ENCODE measurements at regions of chr17 and their contacts with region 1.

Region 1: GRCh38 chr17:58249270-58250133 is 11.1 kb downstream of the LPO start:
- DNase-seq: peak; percentile 60 to 95
- ATAC-seq: peak; percentile 70 to 91
- H3K4me3 ChIP-seq: peak overlapping the region; percentile 43
- H3K27ac ChIP-seq: peak overlapping the region; percentile 52 to 72; a peak in 5 of 6 replicates
- H3K4me1 ChIP-seq: peaks cover 8% of the 10 kb centered on the region
- CTCF ChIP-seq: peak; percentile 94
- EP300 ChIP-seq: no peak
- POLR2A ChIP-seq: no peak
- RAD21 ChIP-seq: peak; percentile 58 to 79

Region 2: GRCh38 chr17:58200017-58200633 is 49.4 kb before region 1 on chr17:
- CTCF ChIA-PET with region 1: interaction called, 14 read pairs
- POLR2A ChIA-PET with region 1: no interaction called
- DNase-seq: peak; percentile 80 to 89
- ATAC-seq: peak; percentile 86 to 98
- H3K4me3 ChIP-seq: no peak overlapping the region
- H3K27ac ChIP-seq: 0 out of 6 replicates have a peak overlapping the region, but pooled peaks of 1 of the 2 experiments have one; percentile 23
- H3K4me1 ChIP-seq: no peaks in the 10 kb centered on the region
- CTCF ChIP-seq: peak; percentile 64
- EP300 ChIP-seq: no peak
- POLR2A ChIP-seq: no peak
- RAD21 ChIP-seq: peak in 1 of 2 experiments; percentile 57; a peak in 3 of 5 replicates

Region 3: DNA sequence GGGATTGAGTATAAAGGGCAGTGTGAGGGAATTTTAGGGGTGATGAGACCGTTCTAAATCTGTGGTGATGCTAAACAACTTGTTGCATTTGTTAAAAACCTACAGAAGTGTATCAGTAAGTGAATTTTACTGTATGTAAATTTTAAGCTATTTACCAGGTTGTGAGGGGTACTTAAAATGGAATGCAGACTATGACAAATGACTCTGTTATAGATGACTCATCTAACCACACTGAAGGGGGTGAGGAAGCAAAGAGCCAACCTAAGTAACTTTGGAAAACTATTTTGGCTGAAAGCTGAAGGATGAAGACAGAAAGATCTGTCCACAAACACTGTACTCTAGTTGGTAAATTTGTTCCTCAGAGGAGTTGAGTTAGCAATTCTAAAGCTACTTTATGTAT is 25.2 kb before region 1 on chr17:
- CTCF ChIA-PET with region 1: interaction called, 69 read pairs
- POLR2A ChIA-PET with region 1: no interaction called
- DNase-seq: peak; percentile 16 to 47
- ATAC-seq: no peak; a peak in 1 of 6 replicates
- H3K4me3 ChIP-seq: no peak overlapping the region
- H3K27ac ChIP-seq: no peak overlapping the region
- H3K4me1 ChIP-seq: peaks cover 11% of the 10 kb centered on the region; the same call in 2 of the 3 replicates
- CTCF ChIP-seq: no peak
- EP300 ChIP-seq: no peak
- POLR2A ChIP-seq: no peak
- RAD21 ChIP-seq: no peak

Region 4: GRCh38 chr17:58263773-58264172 is 14.3 kb after region 1 on chr17:
- CTCF ChIA-PET with region 1: interaction called, 19 read pairs
- POLR2A ChIA-PET with region 1: no interaction called
- DNase-seq: no peak
- ATAC-seq: no peak
- H3K4me3 ChIP-seq: no peak overlapping the region
- H3K27ac ChIP-seq: no peak overlapping the region
- H3K4me1 ChIP-seq: no peaks in the 10 kb centered on the region
- CTCF ChIP-seq: no peak
- EP300 ChIP-seq: no peak
- POLR2A ChIP-seq: no peak
- RAD21 ChIP-seq: no peak

Region 5: GRCh38 chr17:58279016-58279711 is 29.7 kb after region 1 on chr17:
- CTCF ChIA-PET with region 1: interaction called, 10 read pairs
- POLR2A ChIA-PET with region 1: no interaction called
- DNase-seq: no peak
- ATAC-seq: no peak
- H3K4me3 ChIP-seq: no peak overlapping the region
- H3K27ac ChIP-seq: no peak overlapping the region
- H3K4me1 ChIP-seq: no peaks in the 10 kb centered on the region
- CTCF ChIP-seq: no peak
- EP300 ChIP-seq: no peak
- POLR2A ChIP-seq: no peak
- RAD21 ChIP-seq: no peak

Region 6: GRCh38 chr17:58447039-58447975 is 197.8 kb after region 1 on chr17:
- CTCF ChIA-PET with region 1: interaction called, 25 read pairs
- POLR2A ChIA-PET with region 1: no interaction called
- DNase-seq: peak; percentile 83 to 92
- ATAC-seq: peak; percentile 100
- H3K4me3 ChIP-seq: no peak overlapping the region
- H3K27ac ChIP-seq: no peak overlapping the region
- H3K4me1 ChIP-seq: no peaks in the 10 kb centered on the region
- CTCF ChIP-seq: peak; percentile 99
- EP300 ChIP-seq: no peak
- POLR2A ChIP-seq: no peak
- RAD21 ChIP-seq: peak; percentile 99 to 100